Right ventricle myocardium superior (tissue), 1 donor: ENCODE measurements at regions of chr1 and their contacts with region 1.

Region 1: GRCh38 chr1:48697066-48697707 is 79.5 kb downstream of the BEND5 start:
- DNase-seq: peak; percentile 68
- ATAC-seq: peak; percentile 61

Region 2: DNA sequence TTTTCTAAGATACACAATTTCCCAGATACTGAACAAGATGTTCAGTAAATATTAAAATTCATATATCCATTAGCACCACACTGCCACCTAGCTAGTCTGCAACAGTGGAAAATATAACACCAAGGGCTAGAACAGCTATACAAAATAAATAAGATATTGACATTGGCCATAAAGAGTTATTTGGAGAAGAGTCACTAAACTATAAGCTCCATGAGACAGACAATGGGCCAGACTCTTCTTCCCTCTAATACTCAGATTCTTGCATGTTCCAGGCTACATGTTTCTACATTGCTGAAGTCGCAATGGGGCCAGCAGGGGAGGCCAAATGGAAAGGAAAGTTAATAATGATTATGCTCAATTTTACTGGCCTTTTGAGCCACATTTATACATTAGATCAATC is 246.7 kb before region 1 on chr1:
- intact Hi-C with region 1: no loop called
- DNase-seq: no peak
- ATAC-seq: no peak

Region 3: DNA sequence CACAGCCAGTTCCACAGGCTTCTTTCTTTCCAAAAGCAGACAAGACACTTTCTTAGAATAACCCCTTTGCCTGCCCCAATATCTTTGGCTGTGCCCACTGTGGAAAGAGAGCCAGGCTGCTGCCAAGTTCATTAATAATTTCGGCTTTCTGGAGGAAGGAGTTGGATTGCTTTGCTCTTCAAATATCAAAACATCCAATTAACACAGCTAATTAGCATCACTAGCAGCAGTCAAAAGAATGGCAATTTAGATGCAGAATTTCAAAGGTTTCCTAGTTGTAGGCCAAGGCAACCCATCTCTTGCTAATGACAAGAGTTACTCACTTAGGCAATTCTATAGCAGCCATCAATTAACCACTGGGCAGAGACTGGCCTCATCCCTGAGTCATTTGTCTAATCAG is 134.2 kb before region 1 on chr1:
- intact Hi-C with region 1: loop called (anchors 10 kb)
- DNase-seq: no peak
- ATAC-seq: no peak

Region 4: GRCh38 chr1:48591181-48591580 is 106.0 kb before region 1 on chr1:
- intact Hi-C with region 1: no loop called
- DNase-seq: no peak
- ATAC-seq: no peak

Region 5: GRCh38 chr1:48817505-48818114 is 120.4 kb after region 1 on chr1:
- intact Hi-C with region 1: loop called (anchors 10 kb)
- DNase-seq: peak; percentile 59
- ATAC-seq: peak; percentile 80